GM12878 (cell line): ENCODE measurements at regions of chr16 and their contacts with region 1.

Region 1: GRCh38 chr16:22190776-22191531 is 15.1 kb upstream of the EEF2K start:
- DNase-seq: peak; percentile 98
- ATAC-seq: peak; percentile 67
- H3K4me3 ChIP-seq: peak overlapping the region; percentile 81
- H3K27ac ChIP-seq: peak overlapping the region; percentile 90
- H3K4me1 ChIP-seq: peaks cover 43% of the 10 kb centered on the region
- H3K27me3 ChIP-seq: no peaks in the 10 kb centered on the region
- CTCF ChIP-seq: no peak
- EP300 ChIP-seq: no peak
- POLR2A ChIP-seq: peak; percentile 85
- RAD21 ChIP-seq: no peak

Region 2: GRCh38 chr16:21599233-21600030 is 591.5 kb before region 1 on chr16 and contains the start of gene METTL9:
- CTCF ChIA-PET with region 1: no interaction called
- POLR2A ChIA-PET with region 1: no interaction called
- RAD21 ChIA-PET with region 1: no interaction called
- SMC1A ChIA-PET with region 1: no interaction called
- in situ Hi-C with region 1: no loop called
- intact Hi-C with region 1: loop called (anchors 2 kb)
- DNase-seq: peak; percentile 73
- ATAC-seq: peak; percentile 92
- H3K4me3 ChIP-seq: peak within 1 kb of the TSS; percentile 87
- H3K27ac ChIP-seq: peak within 1 kb of the TSS; percentile 84
- H3K4me1 ChIP-seq: peaks cover 6% of the 10 kb centered on the region; the same call in 1 of the 2 replicates
- H3K27me3 ChIP-seq: no peaks in the 10 kb centered on the region
- CTCF ChIP-seq: peak in 1 of 3 experiments; percentile 4; a peak in 1 of 6 replicates
- EP300 ChIP-seq: peak; percentile 23 to 30; a peak in 1 of 4 replicates
- POLR2A ChIP-seq: peak; percentile 89
- RAD21 ChIP-seq: no peak
- polyA plus RNA-seq, gene METTL9: 19.4 to 40.0 TPM

Region 3: DNA sequence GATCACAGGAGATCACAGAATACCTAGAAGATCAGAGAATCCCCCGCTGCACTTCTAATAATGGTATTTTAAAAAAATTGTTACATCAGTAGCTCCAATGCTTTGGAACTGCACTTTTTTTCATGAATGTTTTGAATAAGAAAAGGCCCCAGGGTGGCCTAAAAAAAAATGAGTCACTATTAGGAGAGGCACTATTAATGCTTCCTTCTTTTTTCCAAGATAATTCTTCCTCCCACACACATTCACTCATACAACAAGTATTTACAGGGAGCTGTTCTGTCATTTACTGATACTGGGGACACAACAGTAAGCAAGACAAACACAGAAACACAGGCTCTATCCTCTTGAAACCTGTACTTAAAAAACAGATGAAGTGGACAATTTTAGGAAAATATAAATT is 189.4 kb before region 1 on chr16:
- CTCF ChIA-PET with region 1: interaction called, 101 read pairs
- POLR2A ChIA-PET with region 1: no interaction called
- RAD21 ChIA-PET with region 1: interaction called, 51 read pairs
- SMC1A ChIA-PET with region 1: interaction called, 61 read pairs
- in situ Hi-C with region 1: no loop called
- intact Hi-C with region 1: loop called (anchors 1 kb)
- DNase-seq: no peak
- ATAC-seq: no peak
- H3K4me3 ChIP-seq: no peak overlapping the region
- H3K27ac ChIP-seq: no peak overlapping the region
- H3K4me1 ChIP-seq: no peaks in the 10 kb centered on the region
- H3K27me3 ChIP-seq: no peaks in the 10 kb centered on the region
- CTCF ChIP-seq: no peak
- EP300 ChIP-seq: no peak
- POLR2A ChIP-seq: no peak
- RAD21 ChIP-seq: no peak

Region 4: DNA sequence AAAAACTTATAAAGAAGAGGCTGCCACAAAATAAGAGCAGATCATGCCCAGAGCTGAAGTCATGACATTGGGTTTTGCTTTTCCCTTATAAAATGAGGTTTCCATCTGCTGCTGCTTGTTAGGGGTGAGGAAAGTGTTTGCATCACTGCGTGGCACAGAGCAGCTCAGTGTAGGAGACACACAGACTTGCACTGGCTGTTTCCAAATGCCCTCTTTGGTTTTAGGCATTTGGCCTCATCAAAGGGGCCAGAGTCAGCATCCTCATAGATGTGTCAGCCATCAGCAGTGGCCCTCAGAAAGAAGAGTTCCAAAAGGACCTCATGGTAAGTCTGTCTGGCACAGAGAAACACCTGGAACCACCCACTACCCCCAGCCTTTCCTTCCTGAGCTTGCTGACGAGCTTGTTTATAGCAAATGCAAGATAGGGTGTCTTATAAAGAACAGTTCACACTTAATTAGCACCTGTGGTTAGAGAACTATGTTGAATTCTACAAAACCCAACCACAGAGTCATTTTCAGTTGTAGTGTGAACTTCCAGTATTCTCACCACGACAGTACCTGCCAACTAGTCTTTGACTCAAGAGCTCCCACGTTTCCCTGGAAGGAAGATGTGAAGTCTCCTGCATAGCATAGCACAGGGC is 81.6 kb before region 1 on chr16:
- CTCF ChIA-PET with region 1: interaction called, 5 read pairs
- POLR2A ChIA-PET with region 1: interaction called, 5 read pairs
- RAD21 ChIA-PET with region 1: interaction called, 6 read pairs
- SMC1A ChIA-PET with region 1: interaction called, 12 read pairs
- in situ Hi-C with region 1: loop called (anchors 5 kb)
- intact Hi-C with region 1: no loop called
- DNase-seq: no peak
- ATAC-seq: peak; percentile 49
- H3K4me3 ChIP-seq: no peak overlapping the region
- H3K27ac ChIP-seq: no peak overlapping the region
- H3K4me1 ChIP-seq: no peaks in the 10 kb centered on the region
- H3K27me3 ChIP-seq: peaks cover 0 to 8% of the 10 kb centered on the region in 2 experiments; a peak in 1 of 4 replicates
- CTCF ChIP-seq: no peak
- EP300 ChIP-seq: no peak
- POLR2A ChIP-seq: no peak
- RAD21 ChIP-seq: no peak

Region 5: DNA sequence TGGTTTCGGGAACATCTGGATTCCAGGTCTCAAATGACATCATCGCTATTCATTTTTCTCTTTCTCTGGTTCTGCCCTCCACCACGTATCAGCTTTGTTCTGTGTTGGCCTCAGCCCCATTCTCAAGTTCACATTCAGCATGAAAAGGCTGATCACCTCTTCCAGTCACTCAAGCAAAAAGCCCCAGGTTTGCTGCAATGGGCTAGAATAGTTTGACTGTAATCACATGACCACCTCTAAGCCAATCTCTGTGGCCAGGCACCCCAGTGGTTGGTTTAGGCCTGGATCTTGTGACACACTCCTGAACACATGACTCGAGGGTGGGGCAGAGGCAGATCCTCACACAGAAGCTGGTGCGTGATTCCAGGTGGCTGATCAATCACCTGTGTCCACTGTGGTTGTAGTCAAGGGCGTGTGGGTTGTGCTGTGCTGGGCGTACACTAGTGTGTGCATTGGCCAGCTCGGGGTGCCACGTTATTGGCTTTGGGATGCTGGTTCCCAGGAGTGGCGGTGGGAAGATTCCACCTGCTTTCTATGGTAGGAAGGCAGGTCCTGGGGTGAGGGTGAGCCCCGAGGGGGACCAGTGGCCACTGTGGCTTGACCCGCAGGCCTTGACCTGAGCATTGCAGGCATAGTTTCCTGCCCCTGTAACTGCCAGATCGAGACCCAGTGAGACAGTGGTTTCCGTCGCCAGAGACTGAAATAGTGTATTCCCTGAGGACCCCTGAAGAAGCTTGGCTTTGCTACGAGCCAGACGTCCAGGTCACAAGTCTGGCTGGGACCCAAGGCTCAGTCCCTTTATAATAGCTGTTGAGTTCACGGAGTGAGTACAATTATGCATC is 27.2 kb after region 1 on chr16:
- CTCF ChIA-PET with region 1: interaction called, 8 read pairs
- POLR2A ChIA-PET with region 1: interaction called, 17 read pairs
- RAD21 ChIA-PET with region 1: interaction called, 4 read pairs
- SMC1A ChIA-PET with region 1: interaction called, 16 read pairs
- in situ Hi-C with region 1: no loop called
- intact Hi-C with region 1: no loop called
- DNase-seq: peak; percentile 83
- ATAC-seq: peak; percentile 99
- H3K4me3 ChIP-seq: peak overlapping the region; percentile 51; the same call in 1 of the 2 replicates
- H3K27ac ChIP-seq: peak overlapping the region; percentile 54
- H3K4me1 ChIP-seq: peaks cover 12% of the 10 kb centered on the region
- H3K27me3 ChIP-seq: no peaks in the 10 kb centered on the region
- CTCF ChIP-seq: no peak
- EP300 ChIP-seq: peak in 1 of 2 experiments; percentile 46; a peak in 1 of 4 replicates
- POLR2A ChIP-seq: peak; percentile 72
- RAD21 ChIP-seq: no peak

Region 6: DNA sequence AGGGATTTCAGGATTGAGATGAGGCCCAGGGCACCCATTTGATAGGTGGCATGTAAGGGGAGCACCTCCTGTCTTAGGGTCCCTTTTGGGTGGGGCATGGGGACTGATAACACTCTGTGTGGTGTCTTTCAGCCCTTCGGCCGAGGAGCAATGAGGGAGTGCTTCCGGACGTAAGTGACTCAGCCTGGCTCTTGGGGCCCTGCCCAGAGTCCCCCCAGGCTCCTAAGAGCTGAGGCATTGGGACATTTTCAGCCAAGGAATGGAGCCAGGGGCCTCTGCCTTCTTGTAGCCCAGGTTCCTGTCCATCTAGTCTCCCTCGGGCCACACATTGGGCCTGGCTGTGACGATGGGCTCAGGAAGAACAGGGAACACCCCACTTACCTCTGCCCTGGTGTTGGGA is 59.6 kb after region 1 on chr16:
- CTCF ChIA-PET with region 1: no interaction called
- POLR2A ChIA-PET with region 1: no interaction called
- RAD21 ChIA-PET with region 1: no interaction called
- SMC1A ChIA-PET with region 1: no interaction called
- in situ Hi-C with region 1: no loop called
- intact Hi-C with region 1: no loop called
- DNase-seq: no peak
- ATAC-seq: no peak
- H3K4me3 ChIP-seq: no peak overlapping the region
- H3K27ac ChIP-seq: no peak overlapping the region
- H3K4me1 ChIP-seq: no peaks in the 10 kb centered on the region
- H3K27me3 ChIP-seq: no peaks in the 10 kb centered on the region
- CTCF ChIP-seq: no peak
- EP300 ChIP-seq: no peak
- POLR2A ChIP-seq: no peak
- RAD21 ChIP-seq: no peak

Region 7: DNA sequence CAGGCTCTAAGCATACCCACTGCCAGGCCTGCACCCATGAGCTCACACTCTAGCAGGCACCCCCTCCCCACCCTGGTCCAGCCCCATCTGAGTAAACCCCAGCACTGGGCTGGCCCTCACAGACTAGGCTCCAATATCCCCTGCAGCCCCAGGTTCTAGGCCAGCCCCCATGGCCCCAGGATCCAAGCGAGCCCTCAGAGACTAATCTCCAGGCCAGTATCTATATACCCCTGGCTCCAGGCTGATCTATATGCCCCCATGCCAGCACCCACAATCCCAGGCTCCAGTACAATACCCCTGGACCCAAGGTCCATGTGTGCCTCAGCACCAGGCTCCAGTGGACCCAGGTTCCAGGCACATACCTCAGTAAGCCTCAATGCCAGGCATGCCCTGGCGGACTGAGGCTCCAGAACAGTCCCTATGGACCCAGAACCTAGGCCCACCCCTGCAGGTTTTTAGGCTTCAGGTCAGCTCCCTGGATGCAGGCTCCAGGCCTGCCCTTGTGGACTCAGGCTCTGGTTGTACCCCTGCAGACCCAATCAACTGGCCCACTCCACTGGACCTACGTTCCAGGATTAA is 144.8 kb after region 1 on chr16:
- CTCF ChIA-PET with region 1: no interaction called
- POLR2A ChIA-PET with region 1: no interaction called
- RAD21 ChIA-PET with region 1: no interaction called
- SMC1A ChIA-PET with region 1: no interaction called
- in situ Hi-C with region 1: no loop called
- intact Hi-C with region 1: no loop called
- DNase-seq: no peak
- ATAC-seq: no peak
- H3K4me3 ChIP-seq: no peak overlapping the region
- H3K27ac ChIP-seq: no peak overlapping the region
- H3K4me1 ChIP-seq: no peaks in the 10 kb centered on the region
- H3K27me3 ChIP-seq: no peaks in the 10 kb centered on the region
- CTCF ChIP-seq: no peak
- EP300 ChIP-seq: no peak
- POLR2A ChIP-seq: no peak
- RAD21 ChIP-seq: no peak

Region 8: DNA sequence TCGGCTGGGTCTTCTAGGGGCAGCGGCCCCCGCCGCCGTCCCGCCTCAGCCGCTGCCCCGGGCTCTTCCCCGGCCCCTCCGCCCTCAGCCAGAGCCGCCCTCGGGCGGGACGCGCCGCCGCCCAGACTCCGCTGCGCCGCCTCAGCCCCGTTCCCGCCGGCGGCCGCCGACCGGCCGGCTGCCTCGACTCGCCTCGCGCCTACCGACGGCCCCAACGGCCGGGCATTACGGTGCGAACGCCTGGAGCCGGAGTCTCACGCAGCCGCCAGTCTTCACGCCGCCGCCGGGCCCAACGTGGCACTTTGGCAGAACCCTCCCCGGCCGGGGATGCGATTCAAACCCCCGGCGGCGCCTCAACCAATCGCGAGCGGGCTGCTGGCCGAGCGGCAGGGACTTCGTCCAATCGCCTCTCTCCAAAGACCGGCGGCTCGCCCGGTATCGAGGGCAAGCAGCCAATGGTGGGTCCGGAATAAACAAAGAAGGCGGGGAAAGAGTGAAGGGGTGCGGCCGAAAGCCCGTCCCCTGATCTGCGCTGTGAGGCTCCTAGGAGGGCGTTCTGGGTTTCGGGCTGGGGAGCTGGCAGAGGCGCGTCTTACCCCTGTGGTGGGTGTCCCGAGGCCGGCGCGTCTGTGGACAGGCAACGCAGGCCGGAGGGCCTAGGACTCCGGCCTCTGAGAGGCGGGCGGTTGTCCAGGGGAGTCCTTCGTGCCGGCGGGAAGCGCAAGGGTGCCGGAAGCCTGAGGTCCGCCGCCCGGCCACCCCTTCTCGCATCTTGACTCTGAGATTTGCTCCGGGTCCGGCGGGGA is 183.6 kb after region 1 on chr16 and contains the start of gene CDR2:
- CTCF ChIA-PET with region 1: no interaction called
- POLR2A ChIA-PET with region 1: no interaction called
- RAD21 ChIA-PET with region 1: no interaction called
- SMC1A ChIA-PET with region 1: no interaction called
- in situ Hi-C with region 1: no loop called
- intact Hi-C with region 1: loop called (anchors 5 kb)
- DNase-seq: peak; percentile 81
- ATAC-seq: peak; percentile 97
- H3K4me3 ChIP-seq: peak within 1 kb of the TSS; percentile 89
- H3K27ac ChIP-seq: peak within 1 kb of the TSS; percentile 77
- H3K4me1 ChIP-seq: peaks cover 13% of the 10 kb centered on the region; the same call in 1 of the 2 replicates
- H3K27me3 ChIP-seq: no peaks in the 10 kb centered on the region
- CTCF ChIP-seq: no peak
- EP300 ChIP-seq: no peak
- POLR2A ChIP-seq: peak; percentile 97
- RAD21 ChIP-seq: no peak
- polyA plus RNA-seq, gene CDR2: 4.8 to 5.5 TPM